OCI-LY7 (cell line): ENCODE measurements at regions of chr6 and their contacts with region 1.

Region 1: GRCh38 chr6:110179401-110180227 is at the start of gene WASF1:
- DNase-seq: peak; percentile 97
- H3K4me3 ChIP-seq: peak within 1 kb of the TSS; percentile 83
- H3K27ac ChIP-seq: peak within 1 kb of the TSS; percentile 74
- H3K4me1 ChIP-seq: peaks cover 51% of the 10 kb centered on the region
- CTCF ChIP-seq: no peak
- total RNA-seq, gene WASF1: 21.7 and 34.6 TPM in 2 replicates

Region 2: DNA sequence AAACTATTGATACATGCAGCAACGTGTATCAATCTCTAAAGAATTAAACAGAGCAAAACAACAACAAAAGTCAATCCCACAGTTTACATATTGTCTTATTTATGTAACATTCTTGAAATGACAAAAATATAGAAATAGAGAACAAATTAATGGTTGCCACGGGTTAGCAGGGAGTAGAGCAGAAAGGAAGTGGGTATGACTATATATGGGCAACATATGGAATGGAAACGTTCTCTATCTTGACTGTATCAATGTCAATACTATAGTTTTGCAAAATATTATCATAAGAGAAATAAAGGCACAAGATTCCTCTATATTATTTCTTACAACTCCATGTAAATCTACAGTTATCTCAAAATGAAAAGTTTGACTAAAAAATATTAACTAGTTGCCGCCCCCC is 501.4 kb before region 1 on chr6:
- CTCF ChIA-PET with region 1: no interaction called
- POLR2A ChIA-PET with region 1: no interaction called
- intact Hi-C with region 1: no loop called
- DNase-seq: no peak
- H3K4me3 ChIP-seq: no peak overlapping the region
- H3K27ac ChIP-seq: no peak overlapping the region
- H3K4me1 ChIP-seq: peaks cover 3% of the 10 kb centered on the region
- CTCF ChIP-seq: no peak

Region 3: DNA sequence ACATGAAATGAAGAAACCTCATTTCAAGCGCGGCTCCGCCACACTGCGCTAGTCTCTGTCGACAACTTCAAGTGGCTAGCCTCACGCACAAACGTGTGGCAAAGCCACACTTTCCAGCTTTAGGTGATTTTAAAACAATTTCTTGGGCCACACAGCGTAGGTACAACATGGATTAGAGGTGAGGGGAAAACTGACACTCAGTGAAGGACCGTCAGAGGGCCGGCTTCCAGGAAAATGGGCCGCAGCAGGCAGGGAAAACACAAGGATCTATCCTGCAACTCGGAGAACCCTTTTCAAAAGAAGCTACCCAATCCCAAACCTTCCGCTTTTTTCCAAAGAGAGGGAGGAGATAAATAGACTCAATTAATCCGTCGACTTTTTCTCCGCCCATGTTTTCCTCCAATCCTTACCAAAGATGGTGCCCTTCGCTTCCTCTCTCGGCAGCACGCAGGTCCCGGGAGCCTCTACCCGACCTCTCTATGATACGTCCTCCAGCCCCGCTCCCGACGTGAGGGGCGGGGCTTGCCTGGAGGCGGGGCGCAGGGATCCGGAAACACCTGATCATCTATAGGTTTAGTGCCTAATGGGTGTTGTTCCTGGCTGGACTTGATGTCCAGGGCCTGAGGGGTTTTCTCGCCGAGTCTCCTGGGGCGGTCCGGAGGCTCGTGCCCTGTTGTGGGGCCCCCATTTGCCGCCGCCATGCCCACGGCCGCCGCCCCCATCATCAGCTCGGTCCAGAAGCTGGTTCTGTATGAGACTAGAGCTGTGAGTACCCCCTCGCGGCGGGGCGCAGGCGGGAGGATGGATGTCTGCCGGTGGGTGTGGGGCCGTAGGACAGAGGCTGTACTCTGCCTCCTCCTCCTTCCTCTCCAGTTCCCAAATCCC is 488.6 kb before region 1 on chr6 and contains the starts of genes AK9 and FIG4:
- CTCF ChIA-PET with region 1: no interaction called
- POLR2A ChIA-PET with region 1: interaction called, 3 read pairs
- intact Hi-C with region 1: loop called (anchors 5 kb)
- DNase-seq: peak; percentile 92
- H3K4me3 ChIP-seq: peak within 1 kb of the TSS; percentile 93
- H3K27ac ChIP-seq: peak within 1 kb of the TSS; percentile 31
- H3K4me1 ChIP-seq: peaks cover 27% of the 10 kb centered on the region
- CTCF ChIP-seq: peak; percentile 57
- total RNA-seq, gene AK9: 2.0 and 6.7 TPM in 2 replicates
- total RNA-seq, gene FIG4: 10.4 and 13.3 TPM in 2 replicates

Region 4: GRCh38 chr6:110063594-110064263 is 115.9 kb before region 1 on chr6:
- CTCF ChIA-PET with region 1: no interaction called
- POLR2A ChIA-PET with region 1: interaction called, 3 read pairs
- intact Hi-C with region 1: loop called (anchors 5 kb)
- DNase-seq: no peak
- H3K4me3 ChIP-seq: no peak overlapping the region
- H3K27ac ChIP-seq: no peak overlapping the region
- H3K4me1 ChIP-seq: peaks cover 34% of the 10 kb centered on the region
- CTCF ChIP-seq: no peak

Region 5: DNA sequence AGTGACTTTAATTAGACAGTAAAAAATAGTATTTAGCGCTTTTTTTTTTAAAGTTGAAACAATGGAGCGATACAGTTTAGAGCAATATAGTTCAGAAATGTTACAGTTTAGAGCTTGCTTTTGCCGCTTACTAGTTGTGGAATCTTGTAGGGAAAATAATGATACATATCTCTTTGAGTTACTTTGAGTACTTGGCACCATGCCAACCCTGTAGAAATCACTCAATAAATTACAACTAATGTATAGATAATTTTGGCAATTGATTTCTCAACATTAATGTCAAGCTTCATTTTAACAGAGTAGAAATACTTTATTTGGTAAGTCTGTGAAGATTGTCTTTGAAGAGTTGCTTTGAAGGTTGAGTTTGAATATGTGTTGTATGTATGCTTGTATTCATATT is 28.0 kb after region 1 on chr6:
- CTCF ChIA-PET with region 1: interaction called, 20 read pairs
- POLR2A ChIA-PET with region 1: interaction called, 55 read pairs
- intact Hi-C with region 1: loop called (anchors 2 kb)
- DNase-seq: no peak
- H3K4me3 ChIP-seq: no peak overlapping the region
- H3K27ac ChIP-seq: no peak overlapping the region
- H3K4me1 ChIP-seq: peaks cover 42% of the 10 kb centered on the region
- CTCF ChIP-seq: no peak

Region 6: DNA sequence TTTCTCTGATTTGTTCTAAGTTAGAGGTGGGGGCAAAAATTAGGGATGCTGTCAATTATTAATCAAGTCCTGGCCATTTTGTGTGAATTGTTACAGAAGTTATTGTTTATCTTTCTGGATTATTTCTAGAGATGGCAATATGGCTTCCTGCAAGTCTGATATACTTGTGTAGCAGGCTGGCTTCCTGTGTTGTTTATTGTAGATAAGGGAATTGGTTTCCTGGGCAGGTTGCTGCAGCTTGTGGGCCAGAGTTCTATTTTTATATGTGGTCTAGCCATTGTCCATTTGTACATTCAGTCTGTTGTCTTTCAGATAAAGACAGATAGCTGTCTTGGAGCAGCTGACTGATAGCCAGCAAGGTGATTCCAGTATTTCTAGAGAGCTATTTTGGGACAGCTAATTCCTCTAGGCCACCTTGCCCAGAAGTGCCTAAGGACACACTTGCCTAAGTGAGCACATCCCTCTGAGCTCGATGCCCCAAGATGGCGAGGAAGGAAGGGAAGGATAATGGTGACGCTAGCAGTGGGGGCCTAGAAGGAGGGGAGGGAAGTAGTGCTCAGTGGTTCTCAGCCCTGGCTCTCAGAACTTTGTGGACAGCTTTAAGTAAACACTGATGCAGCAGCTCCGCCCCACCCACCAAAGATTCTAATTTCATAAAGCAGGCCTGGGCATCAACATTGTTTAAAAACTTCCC is 210.2 kb after region 1 on chr6:
- CTCF ChIA-PET with region 1: interaction called, 3 read pairs
- POLR2A ChIA-PET with region 1: interaction called, 6 read pairs
- intact Hi-C with region 1: loop called (anchors 1 kb)
- DNase-seq: peak; percentile 9
- H3K4me3 ChIP-seq: no peak overlapping the region
- H3K27ac ChIP-seq: no peak overlapping the region
- H3K4me1 ChIP-seq: no peaks in the 10 kb centered on the region
- CTCF ChIP-seq: no peak